ENCODE measurements at regions of chr12 and their contacts with region 1.

Region 1: GRCh38 chr12:110600254-110600653 is 13.7 kb upstream of the TCTN1 start:
- DNase-seq: no peak
- ATAC-seq: peak; percentile 63
- H3K4me3 ChIP-seq: no peak overlapping the region
- H3K4me1 ChIP-seq: no peaks in the 10 kb centered on the region
- CTCF ChIP-seq: no peak

Region 2: DNA sequence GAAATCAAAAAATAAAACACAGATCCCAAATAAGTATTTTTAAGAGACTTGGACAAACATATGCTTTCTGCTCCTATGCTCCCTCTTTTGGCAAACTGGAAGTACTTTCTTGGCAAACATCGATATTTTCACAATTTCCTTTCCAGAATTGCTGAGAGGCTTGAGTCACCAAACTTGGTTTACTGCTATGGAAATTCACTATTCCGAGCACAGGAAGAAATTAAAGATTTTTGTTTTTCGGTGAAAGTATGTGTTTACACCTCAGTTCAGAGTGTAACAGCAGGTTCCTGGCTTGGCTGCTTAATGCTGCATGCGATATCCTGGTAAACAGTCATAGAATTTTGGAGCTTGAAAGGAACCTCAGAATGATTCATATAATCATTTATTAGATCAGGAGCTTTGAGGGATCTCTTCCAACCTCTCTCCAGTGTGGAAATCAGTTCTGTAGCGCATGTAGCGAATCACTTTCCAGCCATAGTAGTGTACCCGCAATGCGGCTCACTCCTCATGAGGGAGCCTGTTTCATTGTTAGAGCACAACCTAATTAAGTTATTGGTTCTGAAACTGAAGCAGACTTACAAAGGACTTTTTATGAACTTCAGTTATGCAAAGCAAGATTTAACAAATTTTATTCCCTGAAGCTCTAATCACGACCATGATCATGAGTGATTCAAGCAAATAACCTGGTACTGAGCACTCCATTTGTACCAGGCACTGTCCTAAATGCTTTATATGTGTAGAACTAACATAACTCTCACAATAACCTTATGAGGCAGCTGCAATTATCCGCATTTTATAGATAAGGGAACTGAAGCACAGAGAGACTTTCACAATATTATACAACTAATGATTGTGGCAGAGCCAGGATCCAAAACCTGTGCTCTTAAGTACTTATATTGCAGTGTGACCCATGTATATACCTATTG is 375.6 kb before region 1 on chr12:
- intact Hi-C with region 1: no loop called
- DNase-seq: peak in 1 of 3 donors; percentile 31
- ATAC-seq: peak; percentile 81
- H3K4me3 ChIP-seq: no peak overlapping the region
- H3K4me1 ChIP-seq: peaks cover 2% of the 10 kb centered on the region
- CTCF ChIP-seq: peak; percentile 34

Region 3: GRCh38 chr12:110513842-110514241 is 86.4 kb before region 1 on chr12:
- intact Hi-C with region 1: loop called (anchors 5 kb)
- DNase-seq: no peak
- ATAC-seq: no peak
- H3K4me3 ChIP-seq: no peak overlapping the region
- H3K4me1 ChIP-seq: no peaks in the 10 kb centered on the region
- CTCF ChIP-seq: no peak

Region 4: GRCh38 chr12:110549716-110550115 is 50.5 kb before region 1 on chr12:
- intact Hi-C with region 1: loop called in 1 of 2 experiments (anchors 5 kb)
- DNase-seq: no peak
- ATAC-seq: no peak
- H3K4me3 ChIP-seq: no peak overlapping the region
- H3K4me1 ChIP-seq: peaks cover under 1% of the 10 kb centered on the region
- CTCF ChIP-seq: no peak

Region 5: DNA sequence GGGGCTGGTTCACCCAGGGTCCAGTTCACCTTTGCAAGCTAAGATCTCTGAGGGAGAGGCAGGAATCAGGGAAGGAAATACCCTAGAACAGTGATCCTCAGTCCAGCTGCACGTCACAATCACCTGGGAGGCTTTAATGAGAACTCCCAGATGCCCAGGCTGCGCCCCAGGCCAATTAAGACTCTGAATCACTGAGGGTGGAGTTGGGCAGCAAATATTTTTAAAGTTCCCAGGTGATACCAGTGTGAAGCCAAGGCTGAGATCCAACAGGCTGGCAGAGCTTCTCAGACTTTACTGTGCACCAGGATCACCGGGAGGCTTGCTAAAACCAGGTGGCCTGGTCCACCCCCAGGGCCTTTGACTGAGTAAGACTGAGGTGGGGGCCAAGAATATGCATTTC is 296.3 kb after region 1 on chr12:
- intact Hi-C with region 1: no loop called
- DNase-seq: no peak
- ATAC-seq: peak; percentile 58
- H3K4me3 ChIP-seq: no peak overlapping the region
- H3K4me1 ChIP-seq: no peaks in the 10 kb centered on the region
- CTCF ChIP-seq: no peak

Measured in mucosa of descending colon (tissue), 3 donors.